CD8-positive, alpha-beta T cell (primary cell): ENCODE measurements at regions of chr17 and their contacts with region 1.

Region 1: DNA sequence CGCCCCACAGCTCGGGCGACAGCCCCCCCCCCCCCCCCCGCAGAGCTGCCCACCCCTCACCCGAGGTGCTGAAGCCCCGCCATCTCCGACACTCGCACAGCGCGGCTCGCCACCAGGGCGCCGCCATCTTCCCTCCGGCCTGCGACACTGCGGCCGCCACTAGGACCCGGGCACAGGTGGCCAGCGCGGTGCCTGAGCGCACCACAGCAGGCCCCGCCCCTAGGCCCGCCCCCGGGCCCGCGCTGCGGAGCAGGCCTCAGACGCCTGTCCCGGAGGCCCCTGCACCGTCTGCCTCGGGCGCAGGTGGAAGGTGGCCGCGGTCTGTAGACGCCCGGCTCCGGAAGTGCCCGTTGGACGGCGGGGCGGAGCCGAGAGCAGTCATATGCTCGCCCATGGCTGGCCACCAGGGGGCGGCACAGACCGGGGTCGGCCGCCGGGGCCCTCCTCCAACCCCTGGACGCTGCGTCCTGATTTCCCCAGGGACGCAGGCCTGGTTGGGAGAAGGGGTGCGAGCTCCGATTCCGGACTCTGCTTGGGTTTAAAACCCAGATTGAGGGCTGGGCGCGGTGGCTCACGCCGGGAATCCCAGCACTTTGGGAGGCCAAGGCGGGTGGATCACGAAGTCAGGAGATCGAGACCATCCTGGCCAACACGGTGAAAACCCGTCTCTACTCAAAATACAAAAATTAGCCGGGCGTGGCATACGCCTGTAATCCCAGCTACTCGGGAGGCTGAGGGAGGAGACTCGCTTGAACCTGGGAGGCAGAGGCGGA is at the start of gene MRPL38:
- DNase-seq: peak; percentile 85 to 98 (median 91)
- ATAC-seq: peak; percentile 96
- H3K4me3 ChIP-seq: peak within 1 kb of the TSS; percentile 77 to 81
- H3K4me3 Mint-ChIP-seq: peak within 1 kb of the TSS; percentile 84
- H3K27ac ChIP-seq: peak within 1 kb of the TSS; percentile 71 to 81
- H3K27ac Mint-ChIP-seq: peak within 1 kb of the TSS; percentile 92
- H3K4me1 ChIP-seq: peaks cover 14% of the 10 kb centered on the region
- H3K4me1 Mint-ChIP-seq: peaks cover 13% of the 10 kb centered on the region
- H3K27me3 ChIP-seq: no peaks in the 10 kb centered on the region
- H3K27me3 Mint-ChIP-seq: no peaks in the 10 kb centered on the region
- CTCF ChIP-seq: peak; percentile 99
- total RNA-seq, gene MRPL38: 171 to 181 TPM

Region 2: DNA sequence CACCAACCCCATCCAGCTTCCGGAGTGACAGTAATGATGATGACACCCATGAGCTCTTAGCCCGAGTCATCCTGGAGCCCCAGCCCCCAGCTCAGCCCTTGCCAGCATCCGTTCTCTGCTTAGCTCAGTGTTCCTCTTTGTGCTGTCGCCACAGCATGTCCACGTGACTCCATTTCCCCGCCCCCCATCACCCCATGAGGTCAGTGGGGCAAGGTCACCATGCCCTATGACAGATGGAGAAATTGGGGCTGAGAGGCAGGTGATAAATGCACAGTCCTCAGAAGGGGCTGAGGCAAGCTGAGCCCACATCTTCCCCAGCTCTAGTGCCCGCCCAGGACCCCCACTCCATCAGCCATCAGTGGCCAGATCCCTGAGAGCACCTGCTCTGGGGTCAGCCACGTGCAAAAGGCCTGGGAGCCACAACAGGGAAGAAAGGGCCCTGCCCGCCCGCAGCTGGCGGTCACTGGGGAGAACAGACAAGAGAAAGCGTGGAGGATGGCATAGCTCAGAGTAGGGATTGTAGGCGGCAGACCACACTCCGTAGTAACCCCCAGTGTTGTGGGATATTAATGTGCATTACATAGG is 166.6 kb before region 1 on chr17:
- CTCF ChIA-PET with region 1: no interaction called
- POLR2A ChIA-PET with region 1: no interaction called
- intact Hi-C with region 1: no loop called
- DNase-seq: peak in 1 of 9 experiments; percentile 40
- ATAC-seq: no peak
- H3K4me3 ChIP-seq: no peak overlapping the region
- H3K4me3 Mint-ChIP-seq: no peak overlapping the region
- H3K27ac ChIP-seq: no peak overlapping the region
- H3K27ac Mint-ChIP-seq: no peak overlapping the region
- H3K4me1 ChIP-seq: no peaks in the 10 kb centered on the region
- H3K4me1 Mint-ChIP-seq: peaks cover 3% of the 10 kb centered on the region
- H3K27me3 ChIP-seq: no peaks in the 10 kb centered on the region
- H3K27me3 Mint-ChIP-seq: no peaks in the 10 kb centered on the region
- CTCF ChIP-seq: no peak

Region 3: GRCh38 chr17:75784473-75785015 is 120.4 kb before region 1 on chr17 and contains the start of gene UNK:
- CTCF ChIA-PET with region 1: no interaction called
- POLR2A ChIA-PET with region 1: interaction called, 4 read pairs
- intact Hi-C with region 1: loop called (anchors 1 to 2 kb)
- DNase-seq: peak; percentile 91 to 99 (median 96)
- ATAC-seq: peak; percentile 64
- H3K4me3 ChIP-seq: peak within 1 kb of the TSS; percentile 57 to 78
- H3K4me3 Mint-ChIP-seq: peak within 1 kb of the TSS; percentile 93
- H3K27ac ChIP-seq: peak within 1 kb of the TSS; percentile 95 to 100
- H3K27ac Mint-ChIP-seq: peak within 1 kb of the TSS; percentile 98
- H3K4me1 ChIP-seq: peaks cover 39% of the 10 kb centered on the region
- H3K4me1 Mint-ChIP-seq: peaks cover 49% of the 10 kb centered on the region
- H3K27me3 ChIP-seq: no peaks in the 10 kb centered on the region
- H3K27me3 Mint-ChIP-seq: no peaks in the 10 kb centered on the region
- CTCF ChIP-seq: no peak
- total RNA-seq, gene UNK: 37.3 to 42.8 TPM

Region 4: DNA sequence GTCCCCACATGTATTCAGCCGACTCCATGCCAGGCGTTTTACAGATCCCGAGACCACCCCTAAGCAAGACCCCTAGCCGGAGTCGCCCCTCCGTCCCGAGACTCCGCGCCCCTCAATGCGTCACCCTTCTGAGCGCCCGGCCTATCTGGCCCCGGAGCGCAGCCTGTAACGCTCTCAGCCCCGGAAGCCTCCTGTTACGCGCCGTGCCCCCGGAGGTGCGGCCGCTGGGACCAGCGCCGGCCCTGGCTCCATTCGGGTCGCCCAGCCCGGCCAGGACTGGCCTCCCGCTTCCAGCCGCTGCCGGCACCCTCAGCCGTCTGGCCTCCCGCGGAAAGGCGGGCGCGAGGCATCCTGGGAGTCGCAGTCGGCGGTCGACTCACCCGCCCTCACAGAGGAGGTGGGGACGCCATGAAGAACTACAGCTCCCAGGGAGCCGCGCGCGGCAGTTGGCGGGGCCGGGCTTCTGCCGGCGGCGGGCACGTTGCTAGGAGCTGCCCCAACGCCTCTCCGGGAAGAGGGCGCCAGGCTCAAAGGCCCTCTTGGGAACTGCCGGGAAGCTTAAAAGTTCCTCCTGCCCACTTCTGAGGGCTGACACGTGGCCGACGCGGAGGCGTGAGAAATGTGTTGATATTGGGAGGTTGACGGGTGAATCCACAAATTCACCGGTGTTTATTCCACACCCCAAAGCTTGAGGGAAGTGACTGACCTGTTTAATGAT is 35.9 kb after region 1 on chr17 and contains the start of gene FBF1:
- CTCF ChIA-PET with region 1: no interaction called
- POLR2A ChIA-PET with region 1: interaction called, 4 read pairs
- intact Hi-C with region 1: loop called (anchors 1 kb)
- DNase-seq: peak; percentile 64 to 92 (median 84)
- ATAC-seq: peak; percentile 99
- H3K4me3 ChIP-seq: peak within 1 kb of the TSS; percentile 61 to 84
- H3K4me3 Mint-ChIP-seq: peak within 1 kb of the TSS; percentile 91
- H3K27ac ChIP-seq: peak within 1 kb of the TSS; percentile 49 to 72
- H3K27ac Mint-ChIP-seq: peak within 1 kb of the TSS; percentile 86
- H3K4me1 ChIP-seq: peaks cover 15% of the 10 kb centered on the region
- H3K4me1 Mint-ChIP-seq: peaks cover 13% of the 10 kb centered on the region
- H3K27me3 ChIP-seq: no peaks in the 10 kb centered on the region
- H3K27me3 Mint-ChIP-seq: no peaks in the 10 kb centered on the region
- CTCF ChIP-seq: no peak
- total RNA-seq, gene FBF1: 18.6 to 21.1 TPM

Region 5: GRCh38 chr17:76072148-76072858 is 167.4 kb after region 1 on chr17 and contains the start of gene SRP68:
- CTCF ChIA-PET with region 1: no interaction called
- POLR2A ChIA-PET with region 1: no interaction called
- intact Hi-C with region 1: loop called in 1 of 2 experiments (anchors 10 kb)
- DNase-seq: peak; percentile 63 to 91 (median 83)
- ATAC-seq: peak; percentile 82
- H3K4me3 ChIP-seq: peak within 1 kb of the TSS; percentile 86 to 98
- H3K4me3 Mint-ChIP-seq: peak within 1 kb of the TSS; percentile 96
- H3K27ac ChIP-seq: peak within 1 kb of the TSS; percentile 77 to 81
- H3K27ac Mint-ChIP-seq: peak within 1 kb of the TSS; percentile 95
- H3K4me1 ChIP-seq: peaks cover 44% of the 10 kb centered on the region
- H3K4me1 Mint-ChIP-seq: peaks cover 53% of the 10 kb centered on the region
- H3K27me3 ChIP-seq: peaks cover 18 to 28% of the 10 kb centered on the region in 2 experiments
- H3K27me3 Mint-ChIP-seq: peaks cover 19% of the 10 kb centered on the region
- CTCF ChIP-seq: no peak
- total RNA-seq, gene SRP68: 93.6 to 99.9 TPM

Region 6: GRCh38 chr17:76296186-76296585 is 391.3 kb after region 1 on chr17:
- CTCF ChIA-PET with region 1: no interaction called
- POLR2A ChIA-PET with region 1: no interaction called
- intact Hi-C with region 1: loop called in 1 of 2 experiments (anchors 1 kb)
- DNase-seq: no peak
- ATAC-seq: no peak
- H3K4me3 ChIP-seq: no peak overlapping the region
- H3K4me3 Mint-ChIP-seq: no peak overlapping the region
- H3K27ac ChIP-seq: no peak overlapping the region
- H3K27ac Mint-ChIP-seq: no peak overlapping the region
- H3K4me1 ChIP-seq: no peaks in the 10 kb centered on the region
- H3K4me1 Mint-ChIP-seq: peaks cover 1% of the 10 kb centered on the region
- H3K27me3 ChIP-seq: no peaks in the 10 kb centered on the region
- H3K27me3 Mint-ChIP-seq: no peaks in the 10 kb centered on the region
- CTCF ChIP-seq: no peak